CD8-positive, alpha-beta T cell (primary cell): ENCODE measurements at regions of chr4 and their contacts with region 1.

Region 1: DNA sequence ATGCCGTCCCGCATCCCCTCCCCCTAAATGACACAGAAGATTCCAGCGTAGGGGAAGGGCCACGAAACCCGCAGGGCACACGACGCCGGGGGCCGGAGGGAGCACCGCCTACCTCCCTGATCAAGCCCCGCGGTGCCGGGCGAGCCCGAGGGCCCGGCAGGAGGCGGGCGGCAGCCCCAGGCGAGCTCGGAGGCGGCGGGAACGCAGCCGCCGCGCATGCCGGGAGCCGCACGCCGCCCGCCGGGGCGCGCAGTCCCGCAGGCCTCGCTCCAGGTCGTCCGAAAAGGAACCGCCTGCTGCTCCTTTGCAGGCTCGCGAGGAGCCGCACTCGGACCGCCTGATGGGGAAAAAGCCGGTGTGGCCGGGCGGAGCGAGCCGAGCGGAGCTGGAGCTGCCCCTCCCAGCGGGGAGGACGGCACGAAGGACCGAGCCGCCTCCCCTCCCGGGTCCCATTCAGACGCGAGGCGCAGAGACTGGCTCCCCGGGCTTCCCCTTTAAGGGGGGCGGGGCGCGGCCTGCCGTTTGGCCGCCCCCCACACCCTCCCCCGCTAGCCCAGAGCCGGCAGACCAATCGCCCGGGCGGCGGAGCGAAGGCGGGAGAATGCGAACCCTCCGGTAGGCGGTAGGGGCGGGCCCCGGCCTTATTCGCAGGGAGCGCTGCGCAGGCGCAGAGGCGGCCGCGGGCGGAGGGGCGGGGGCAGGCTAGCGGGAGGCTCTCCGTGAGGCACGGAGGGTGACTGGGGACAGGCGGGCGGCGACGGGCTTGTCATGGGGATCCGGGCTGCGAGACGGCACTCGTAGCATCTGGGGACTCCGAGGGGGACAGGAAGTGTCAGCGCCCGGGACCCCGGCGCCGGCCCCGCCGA is 561 bp upstream of the ING2 start:
- DNase-seq: peak; percentile 99 to 100 (median 99)
- ATAC-seq: peak; percentile 78
- H3K4me3 ChIP-seq: peak overlapping the region; percentile 95 to 98
- H3K4me3 Mint-ChIP-seq: peak overlapping the region; percentile 98
- H3K27ac ChIP-seq: peak overlapping the region; percentile 84 to 98
- H3K27ac Mint-ChIP-seq: peak overlapping the region; percentile 99
- H3K4me1 ChIP-seq: peaks cover 14% of the 10 kb centered on the region
- H3K4me1 Mint-ChIP-seq: peaks cover 34% of the 10 kb centered on the region
- H3K27me3 ChIP-seq: no peaks in the 10 kb centered on the region
- H3K27me3 Mint-ChIP-seq: no peaks in the 10 kb centered on the region
- CTCF ChIP-seq: no peak

Region 2: DNA sequence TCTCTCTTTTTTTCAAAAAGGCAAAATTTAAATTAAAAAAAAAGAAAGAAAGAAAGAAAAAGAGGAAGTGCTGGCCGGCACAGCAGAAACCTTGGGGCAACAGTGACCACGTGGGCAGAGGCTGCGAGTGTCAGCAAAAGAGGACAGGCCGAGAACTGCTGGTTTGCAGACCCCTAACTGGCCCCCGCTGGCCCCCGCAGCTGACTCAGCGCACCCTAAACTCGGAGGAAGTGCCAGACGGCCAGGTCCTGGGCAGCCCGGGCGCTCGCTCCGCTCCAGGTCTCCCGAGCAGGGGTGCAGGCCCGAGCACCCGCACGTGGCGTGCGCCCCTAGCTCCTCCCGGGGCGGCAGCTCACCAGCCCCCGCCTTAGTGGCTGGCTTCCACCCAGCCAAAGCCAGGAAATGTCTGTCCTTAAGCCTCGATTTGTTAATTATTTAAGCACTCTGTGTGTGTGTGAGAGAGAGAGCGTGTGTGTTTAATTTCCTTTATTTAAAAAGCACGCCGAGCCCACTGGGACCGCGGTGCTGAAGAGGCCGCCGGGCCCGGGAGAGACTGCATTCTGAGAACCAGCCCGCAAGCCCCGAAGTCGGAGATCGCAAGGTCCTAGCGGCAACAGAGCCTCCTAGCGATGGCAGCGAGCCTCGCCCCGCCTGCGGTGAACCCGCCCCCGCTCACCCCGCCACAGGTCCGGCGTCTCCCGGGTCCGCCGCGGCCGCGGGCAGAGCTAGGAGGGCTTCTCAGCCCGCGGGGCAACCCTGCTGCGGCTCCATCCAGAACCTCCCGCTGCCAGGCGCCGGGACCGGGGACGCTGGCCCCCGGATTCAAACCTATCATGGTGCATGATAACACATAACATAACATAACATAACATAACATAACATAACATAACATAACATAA is 105.8 kb before region 1 on chr4:
- CTCF ChIA-PET with region 1: no interaction called
- POLR2A ChIA-PET with region 1: no interaction called
- intact Hi-C with region 1: loop called in 1 of 2 experiments (anchors 2 kb)
- DNase-seq: peak; percentile 31 to 78 (median 63)
- ATAC-seq: peak; percentile 91
- H3K4me3 ChIP-seq: peak overlapping the region; percentile 56 to 83
- H3K4me3 Mint-ChIP-seq: peak overlapping the region; percentile 85
- H3K27ac ChIP-seq: peak overlapping the region in 1 of 2 experiments; percentile 39
- H3K27ac Mint-ChIP-seq: peak overlapping the region; percentile 55
- H3K4me1 ChIP-seq: peaks cover 13% of the 10 kb centered on the region
- H3K4me1 Mint-ChIP-seq: peaks cover 18% of the 10 kb centered on the region
- H3K27me3 ChIP-seq: no peaks in the 10 kb centered on the region
- H3K27me3 Mint-ChIP-seq: peaks cover 2% of the 10 kb centered on the region
- CTCF ChIP-seq: no peak

Region 3: DNA sequence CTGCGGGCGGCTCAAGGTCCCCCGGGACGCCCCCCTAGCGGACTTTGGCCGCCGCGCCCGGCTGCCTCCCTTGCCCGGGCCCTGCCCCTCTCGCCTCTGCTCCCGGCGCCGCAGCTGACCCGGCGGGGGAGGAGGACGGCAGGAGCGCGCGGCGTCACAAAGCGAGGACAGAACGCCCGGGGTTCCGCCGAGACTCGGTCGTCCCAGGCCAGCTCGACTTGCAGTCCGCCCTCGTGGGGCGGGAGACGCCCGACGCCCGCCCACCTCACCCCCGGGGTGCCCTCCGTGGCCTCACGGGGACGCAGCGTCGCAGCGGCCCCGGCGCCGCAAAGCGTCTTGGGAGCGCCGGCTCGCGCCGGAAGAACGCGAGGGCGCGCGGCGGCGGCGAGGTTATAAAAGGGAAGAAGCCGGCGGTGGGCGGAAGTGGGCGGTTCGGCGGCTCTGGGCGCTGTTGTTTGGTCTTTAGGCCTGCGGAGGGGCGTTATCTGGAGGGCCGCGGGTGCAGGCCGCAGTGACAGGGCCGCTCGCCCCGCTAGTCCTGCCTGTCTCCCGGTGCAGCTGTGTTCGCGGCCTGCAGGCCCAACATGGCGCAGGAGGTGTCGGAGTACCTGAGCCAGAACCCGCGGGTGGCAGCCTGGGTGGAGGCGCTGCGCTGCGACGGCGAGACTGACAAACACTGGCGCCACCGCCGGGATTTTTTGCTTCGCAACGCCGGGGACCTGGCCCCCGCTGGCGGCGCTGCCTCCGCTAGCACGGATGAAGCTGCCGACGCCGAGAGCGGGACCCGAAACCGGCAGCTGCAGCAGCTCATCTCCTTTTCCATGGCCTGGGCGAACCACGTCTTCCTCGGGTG is 59.9 kb before region 1 on chr4 and contains the start of gene CDKN2AIP:
- CTCF ChIA-PET with region 1: interaction called, 5 read pairs
- POLR2A ChIA-PET with region 1: interaction called, 23 read pairs
- intact Hi-C with region 1: loop called (anchors 1 kb)
- DNase-seq: peak; percentile 90 to 98 (median 93)
- ATAC-seq: peak; percentile 85
- H3K4me3 ChIP-seq: peak within 1 kb of the TSS; percentile 84 to 92
- H3K4me3 Mint-ChIP-seq: peak within 1 kb of the TSS; percentile 98
- H3K27ac ChIP-seq: peak within 1 kb of the TSS; percentile 84 to 91
- H3K27ac Mint-ChIP-seq: peak within 1 kb of the TSS; percentile 99
- H3K4me1 ChIP-seq: peaks cover 43% of the 10 kb centered on the region
- H3K4me1 Mint-ChIP-seq: peaks cover 59% of the 10 kb centered on the region
- H3K27me3 ChIP-seq: no peaks in the 10 kb centered on the region
- H3K27me3 Mint-ChIP-seq: no peaks in the 10 kb centered on the region
- CTCF ChIP-seq: no peak
- total RNA-seq, gene CDKN2AIP: 51.2 to 51.9 TPM

Region 4: GRCh38 chr4:183527326-183527725 is 23.0 kb after region 1 on chr4:
- CTCF ChIA-PET with region 1: no interaction called
- POLR2A ChIA-PET with region 1: no interaction called
- intact Hi-C with region 1: no loop called
- DNase-seq: no peak
- ATAC-seq: no peak
- H3K4me3 ChIP-seq: no peak overlapping the region
- H3K4me3 Mint-ChIP-seq: no peak overlapping the region
- H3K27ac ChIP-seq: no peak overlapping the region
- H3K27ac Mint-ChIP-seq: no peak overlapping the region
- H3K4me1 ChIP-seq: no peaks in the 10 kb centered on the region
- H3K4me1 Mint-ChIP-seq: no peaks in the 10 kb centered on the region
- H3K27me3 ChIP-seq: no peaks in the 10 kb centered on the region
- H3K27me3 Mint-ChIP-seq: peaks cover 32% of the 10 kb centered on the region
- CTCF ChIP-seq: no peak

Region 5: GRCh38 chr4:183541010-183541751 is 36.9 kb after region 1 on chr4:
- CTCF ChIA-PET with region 1: no interaction called
- POLR2A ChIA-PET with region 1: no interaction called
- intact Hi-C with region 1: no loop called
- DNase-seq: no peak
- ATAC-seq: no peak
- H3K4me3 ChIP-seq: no peak overlapping the region
- H3K4me3 Mint-ChIP-seq: no peak overlapping the region
- H3K27ac ChIP-seq: no peak overlapping the region
- H3K27ac Mint-ChIP-seq: no peak overlapping the region
- H3K4me1 ChIP-seq: no peaks in the 10 kb centered on the region
- H3K4me1 Mint-ChIP-seq: no peaks in the 10 kb centered on the region
- H3K27me3 ChIP-seq: peaks cover 0 to 4% of the 10 kb centered on the region in 2 experiments
- H3K27me3 Mint-ChIP-seq: peaks cover 27% of the 10 kb centered on the region
- CTCF ChIP-seq: no peak

Region 6: DNA sequence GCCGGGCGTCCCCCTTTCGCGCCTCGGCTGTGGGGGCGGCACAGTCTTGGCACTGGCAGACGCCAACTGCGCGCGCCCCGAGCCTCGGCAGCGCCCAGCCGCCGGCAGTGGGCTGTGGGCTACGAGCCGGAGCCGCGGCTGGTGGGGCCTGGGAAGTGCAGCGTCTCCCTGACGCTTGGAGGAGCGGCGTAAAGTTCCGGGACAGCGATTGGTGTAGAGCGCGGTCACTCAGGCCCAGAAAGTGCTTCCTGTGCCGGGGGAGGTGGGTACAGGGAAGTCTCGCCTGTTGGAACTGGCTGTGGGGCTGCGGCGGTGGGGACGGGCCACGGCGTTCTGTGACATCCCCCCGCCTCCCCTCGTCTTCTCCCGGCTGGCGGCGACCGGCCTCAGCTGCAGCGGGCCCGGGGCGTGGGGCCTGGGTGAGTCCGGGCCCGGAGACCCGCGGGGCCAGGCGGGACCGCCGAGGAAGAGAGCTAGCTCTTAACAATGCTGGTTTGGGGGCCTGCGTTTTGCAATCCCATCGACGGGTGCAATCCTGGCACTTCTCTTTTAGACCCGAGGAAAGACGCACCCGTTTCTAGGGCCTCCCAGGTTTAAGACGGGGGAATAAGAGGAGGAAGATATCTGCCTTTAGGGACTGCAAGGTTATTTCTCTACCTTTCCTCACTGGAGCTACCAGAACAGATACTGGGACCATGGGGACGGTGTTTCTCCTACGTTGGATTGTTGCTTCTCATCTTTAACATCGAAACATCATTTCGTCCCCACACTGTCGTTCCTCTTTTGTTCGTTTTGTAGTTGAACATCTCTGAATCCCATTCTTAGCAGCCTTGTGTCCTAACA is 155.0 kb after region 1 on chr4 and contains the starts of genes RWDD4 and TRAPPC11:
- CTCF ChIA-PET with region 1: interaction called, 3 read pairs
- POLR2A ChIA-PET with region 1: interaction called, 9 read pairs
- intact Hi-C with region 1: loop called (anchors 1 kb)
- DNase-seq: peak; percentile 90 to 99 (median 95)
- ATAC-seq: peak; percentile 96
- H3K4me3 ChIP-seq: peak within 1 kb of the TSS; percentile 72 to 83
- H3K4me3 Mint-ChIP-seq: peak within 1 kb of the TSS; percentile 92
- H3K27ac ChIP-seq: peak within 1 kb of the TSS; percentile 83 to 89
- H3K27ac Mint-ChIP-seq: peak within 1 kb of the TSS; percentile 91
- H3K4me1 ChIP-seq: peaks cover 25% of the 10 kb centered on the region
- H3K4me1 Mint-ChIP-seq: peaks cover 42% of the 10 kb centered on the region
- H3K27me3 ChIP-seq: no peaks in the 10 kb centered on the region
- H3K27me3 Mint-ChIP-seq: no peaks in the 10 kb centered on the region
- CTCF ChIP-seq: no peak
- total RNA-seq, gene RWDD4: 9.0 to 12.1 TPM
- total RNA-seq, gene TRAPPC11: 14.7 to 22.1 TPM

Region 7: GRCh38 chr4:184061582-184061981 is 557.3 kb after region 1 on chr4:
- CTCF ChIA-PET with region 1: no interaction called
- POLR2A ChIA-PET with region 1: no interaction called
- intact Hi-C with region 1: no loop called
- DNase-seq: no peak
- ATAC-seq: no peak
- H3K4me3 ChIP-seq: no peak overlapping the region
- H3K4me3 Mint-ChIP-seq: no peak overlapping the region
- H3K27ac ChIP-seq: no peak overlapping the region
- H3K27ac Mint-ChIP-seq: no peak overlapping the region
- H3K4me1 ChIP-seq: no peaks in the 10 kb centered on the region
- H3K4me1 Mint-ChIP-seq: no peaks in the 10 kb centered on the region
- H3K27me3 ChIP-seq: no peaks in the 10 kb centered on the region
- H3K27me3 Mint-ChIP-seq: peaks cover 8% of the 10 kb centered on the region
- CTCF ChIP-seq: no peak

Region 8: GRCh38 chr4:184733654-184734524 is 1229.6 kb after region 1 on chr4 and contains the start of gene CENPU:
- CTCF ChIA-PET with region 1: no interaction called
- POLR2A ChIA-PET with region 1: no interaction called
- intact Hi-C with region 1: loop called in 1 of 2 experiments (anchors 10 kb)
- DNase-seq: peak; percentile 87 to 97 (median 94)
- ATAC-seq: peak; percentile 95
- H3K4me3 ChIP-seq: peak within 1 kb of the TSS; percentile 74 to 79
- H3K4me3 Mint-ChIP-seq: peak within 1 kb of the TSS; percentile 87
- H3K27ac ChIP-seq: peak within 1 kb of the TSS; percentile 2 to 43
- H3K27ac Mint-ChIP-seq: peak within 1 kb of the TSS; percentile 84
- H3K4me1 ChIP-seq: peaks cover 8% of the 10 kb centered on the region
- H3K4me1 Mint-ChIP-seq: peaks cover 18% of the 10 kb centered on the region
- H3K27me3 ChIP-seq: no peaks in the 10 kb centered on the region
- H3K27me3 Mint-ChIP-seq: no peaks in the 10 kb centered on the region
- CTCF ChIP-seq: no peak
- total RNA-seq, gene CENPU: 3.4 TPM

Region 9: DNA sequence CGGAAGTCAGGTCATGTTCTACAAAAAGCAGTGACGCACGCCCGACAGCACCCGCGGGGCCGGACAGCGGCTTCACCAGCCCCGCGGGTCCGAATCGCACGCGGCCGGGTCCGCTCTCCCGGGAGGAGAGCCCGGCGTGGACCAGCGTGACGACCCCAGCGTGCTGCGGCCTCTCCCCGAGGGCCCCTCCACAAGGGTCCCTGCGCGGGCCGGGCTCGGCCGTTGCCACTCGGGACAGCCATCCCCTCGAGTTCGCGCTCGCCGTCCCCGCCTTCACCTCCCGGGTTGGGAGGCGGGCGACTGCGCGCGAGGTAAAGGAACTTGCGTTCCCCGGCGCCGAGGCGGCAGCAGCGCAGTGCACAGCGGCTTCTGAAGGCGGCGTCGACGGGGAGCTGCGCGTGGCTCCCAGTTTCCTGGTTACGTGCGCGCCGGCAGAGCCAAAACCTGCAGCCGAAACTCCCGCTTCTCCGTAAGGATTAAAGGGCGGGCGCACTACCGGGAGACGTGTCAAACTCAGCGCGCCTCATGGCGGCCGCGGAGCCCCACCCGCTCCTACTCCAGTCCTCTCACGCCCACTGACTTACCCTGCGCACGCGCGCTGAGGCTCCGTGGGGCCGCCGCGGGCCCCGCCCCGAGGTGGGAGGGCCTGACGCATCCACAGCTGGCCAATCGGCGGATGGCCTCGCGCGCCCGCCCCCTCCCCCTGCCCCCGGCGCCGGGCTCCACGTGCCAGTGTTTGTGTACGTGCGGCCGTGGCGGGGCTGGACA is 1891.8 kb after region 1 on chr4:
- CTCF ChIA-PET with region 1: no interaction called
- POLR2A ChIA-PET with region 1: no interaction called
- intact Hi-C with region 1: loop called in 1 of 2 experiments (anchors 10 kb)
- DNase-seq: peak; percentile 91 to 98 (median 95)
- ATAC-seq: peak; percentile 92
- H3K4me3 ChIP-seq: peak overlapping the region; percentile 73 to 95
- H3K4me3 Mint-ChIP-seq: peak overlapping the region; percentile 95
- H3K27ac ChIP-seq: peak overlapping the region; percentile 98 to 99
- H3K27ac Mint-ChIP-seq: peak overlapping the region; percentile 99
- H3K4me1 ChIP-seq: peaks cover 16% of the 10 kb centered on the region
- H3K4me1 Mint-ChIP-seq: peaks cover 20% of the 10 kb centered on the region
- H3K27me3 ChIP-seq: no peaks in the 10 kb centered on the region
- H3K27me3 Mint-ChIP-seq: no peaks in the 10 kb centered on the region
- CTCF ChIP-seq: no peak

Region 10: DNA sequence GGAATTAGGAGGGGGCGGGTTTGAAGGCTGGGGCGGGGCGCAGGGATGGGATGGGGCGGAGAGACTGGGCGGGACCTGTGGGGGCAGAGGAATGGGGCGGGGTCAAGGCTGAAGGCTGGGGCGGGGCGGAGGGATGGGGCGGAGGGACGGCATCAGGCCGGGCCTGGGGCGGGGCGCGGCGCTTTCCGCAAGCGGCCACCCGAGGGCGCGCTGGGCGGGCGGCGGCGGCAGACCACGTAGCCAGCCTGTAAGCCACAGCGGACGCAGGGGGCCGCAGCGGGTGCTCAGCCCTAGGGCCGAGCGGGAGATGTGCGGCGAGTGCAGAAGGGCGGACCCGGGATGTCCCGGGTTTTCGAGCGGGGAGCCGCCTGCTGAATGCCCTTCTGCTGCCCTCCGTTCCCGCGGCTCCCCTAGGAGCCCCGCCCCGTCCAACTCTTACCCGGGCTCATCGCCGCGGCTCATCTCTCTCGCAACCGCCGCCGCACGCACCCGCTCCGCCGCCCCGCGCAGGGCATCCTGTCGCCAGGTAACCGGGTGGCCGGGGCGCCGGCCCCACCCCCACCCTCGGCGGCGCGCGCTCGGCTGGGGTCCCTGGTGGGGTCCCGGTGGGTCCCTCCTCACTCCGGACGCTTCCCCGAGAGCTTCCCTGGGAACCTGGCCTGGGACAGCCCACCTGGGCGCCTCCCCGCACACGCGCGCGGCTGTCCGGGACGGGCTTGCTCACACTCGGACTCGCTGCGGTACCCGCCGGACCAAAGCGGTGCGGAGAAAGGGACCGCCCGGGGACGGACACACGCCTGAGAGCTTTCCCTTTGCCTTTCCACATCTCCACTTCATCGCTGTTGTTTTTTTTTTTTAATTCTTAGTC is 1967.2 kb after region 1 on chr4 and contains the start of gene CCDC110:
- CTCF ChIA-PET with region 1: no interaction called
- POLR2A ChIA-PET with region 1: no interaction called
- intact Hi-C with region 1: loop called in 1 of 2 experiments (anchors 2 kb)
- DNase-seq: peak; percentile 79 to 96 (median 88)
- ATAC-seq: peak; percentile 95
- H3K4me3 ChIP-seq: peak within 1 kb of the TSS; percentile 60 to 85
- H3K4me3 Mint-ChIP-seq: peak within 1 kb of the TSS; percentile 93
- H3K27ac ChIP-seq: peak within 1 kb of the TSS; percentile 27 to 34
- H3K27ac Mint-ChIP-seq: peak within 1 kb of the TSS; percentile 67
- H3K4me1 ChIP-seq: peaks cover 13% of the 10 kb centered on the region
- H3K4me1 Mint-ChIP-seq: peaks cover 16% of the 10 kb centered on the region
- H3K27me3 ChIP-seq: no peaks in the 10 kb centered on the region
- H3K27me3 Mint-ChIP-seq: peaks cover 2% of the 10 kb centered on the region
- CTCF ChIP-seq: peak; percentile 64
- total RNA-seq, gene CCDC110: 0.57 TPM in 1 of 2 experiments, not detected in the other